AG04449 (cell line): ENCODE measurements at regions of chr12 and their contacts with region 1.

Region 1: DNA sequence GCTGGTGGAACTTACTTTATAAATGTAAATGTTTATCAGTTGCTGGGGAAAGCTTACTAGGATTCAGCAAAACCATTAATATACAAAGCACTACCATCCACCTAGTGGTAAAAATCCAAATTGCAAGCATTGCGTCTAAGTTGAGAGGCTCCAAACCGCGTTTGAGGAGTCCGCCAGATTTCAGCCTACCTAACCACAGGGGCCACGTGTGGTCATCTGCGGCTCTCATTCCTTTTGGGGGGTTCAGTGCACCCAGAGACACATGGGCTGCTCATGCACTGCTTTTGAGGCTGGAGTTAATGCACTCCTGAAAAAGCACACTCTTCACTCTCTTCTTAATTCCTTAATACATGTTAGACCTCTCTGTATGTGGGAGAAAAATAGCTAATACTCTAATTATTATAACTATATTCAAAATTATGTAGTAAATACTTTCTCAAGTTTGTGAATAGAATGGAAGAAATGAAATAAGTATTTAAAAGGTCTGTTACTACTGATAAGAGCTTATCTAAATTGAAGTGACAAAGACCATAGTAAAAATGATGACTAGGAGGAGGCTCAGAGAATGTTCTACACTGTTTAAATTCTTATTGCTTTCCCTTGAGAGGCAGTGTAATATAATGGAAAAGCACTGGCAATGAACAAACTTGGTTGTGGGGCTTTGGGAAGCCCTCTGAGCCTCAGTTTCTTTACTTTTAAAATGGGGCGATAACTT is 41.4 kb upstream of the MANSC4 start:
- DNase-seq: no peak
- H3K4me3 ChIP-seq: no peak overlapping the region
- CTCF ChIP-seq: peak; percentile 55

Region 2: GRCh38 chr12:27462151-27462694 is 359.2 kb before region 1 on chr12:
- CTCF ChIA-PET with region 1: no interaction called
- POLR2A ChIA-PET with region 1: no interaction called
- DNase-seq: no peak
- H3K4me3 ChIP-seq: no peak overlapping the region
- CTCF ChIP-seq: no peak

Region 3: DNA sequence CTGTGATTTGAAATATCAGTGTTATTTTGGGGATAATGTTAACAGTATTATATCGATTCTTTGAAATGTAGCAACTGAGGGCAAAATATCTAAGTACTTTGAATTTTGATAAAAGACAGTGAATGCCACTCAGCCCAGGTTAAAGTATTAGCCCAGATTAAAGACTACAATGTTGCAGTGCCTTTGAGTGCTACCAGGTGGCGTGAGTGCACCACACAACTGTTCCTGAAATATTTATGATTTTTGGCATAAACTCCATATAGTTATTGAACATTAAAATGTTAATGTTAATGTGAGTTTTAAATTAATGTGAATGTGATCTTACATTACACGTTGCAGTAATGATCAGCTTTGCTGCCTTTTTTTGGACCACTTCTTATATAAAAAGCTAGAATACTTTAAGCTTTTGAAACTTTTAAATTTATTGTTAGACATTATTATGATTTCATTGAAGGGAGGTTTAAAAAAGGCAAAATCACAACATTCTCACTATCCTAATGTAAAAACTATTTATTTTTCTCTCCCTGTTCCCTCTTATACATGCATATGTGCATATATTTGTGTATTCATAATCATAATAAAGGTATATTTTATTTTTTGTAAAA is 88.3 kb before region 1 on chr12:
- CTCF ChIA-PET with region 1: interaction called, 16 read pairs
- POLR2A ChIA-PET with region 1: no interaction called
- DNase-seq: no peak
- H3K4me3 ChIP-seq: no peak overlapping the region
- CTCF ChIP-seq: peak; percentile 79

Region 4: DNA sequence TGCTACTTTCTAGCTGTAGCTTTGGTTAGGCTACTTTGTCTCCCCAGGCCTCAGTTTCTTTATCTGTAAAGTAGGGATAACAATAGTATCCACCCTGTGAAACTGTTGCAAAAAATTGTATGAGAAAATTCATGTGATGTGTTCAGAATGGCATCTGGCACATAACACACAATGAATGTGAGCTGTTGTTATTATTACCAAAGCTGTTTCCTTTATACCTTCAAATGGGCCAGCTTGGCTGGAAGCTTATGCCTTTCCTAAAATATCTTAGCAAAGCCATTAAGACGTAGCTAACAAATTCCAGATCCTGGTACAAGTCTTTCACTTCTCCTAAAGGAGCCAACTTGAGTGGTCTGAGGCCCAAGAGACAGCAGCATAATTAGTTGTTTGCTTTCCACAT is 16.2 kb before region 1 on chr12:
- CTCF ChIA-PET with region 1: interaction called, 59 read pairs
- POLR2A ChIA-PET with region 1: no interaction called
- DNase-seq: no peak
- H3K4me3 ChIP-seq: no peak overlapping the region
- CTCF ChIP-seq: no peak

Region 5: GRCh38 chr12:27840244-27840999 is 19.0 kb after region 1 on chr12:
- CTCF ChIA-PET with region 1: interaction called, 19 read pairs
- POLR2A ChIA-PET with region 1: no interaction called
- DNase-seq: no peak
- H3K4me3 ChIP-seq: no peak overlapping the region
- CTCF ChIP-seq: peak; percentile 32

Region 6: GRCh38 chr12:27940756-27941402 is 119.5 kb after region 1 on chr12:
- CTCF ChIA-PET with region 1: interaction called, 15 read pairs
- POLR2A ChIA-PET with region 1: no interaction called
- DNase-seq: no peak
- H3K4me3 ChIP-seq: no peak overlapping the region
- CTCF ChIP-seq: peak; percentile 80